Endothelial cell of umbilical vein (primary cell): ENCODE measurements at regions of chr2 and their contacts with region 1.

Region 1: DNA sequence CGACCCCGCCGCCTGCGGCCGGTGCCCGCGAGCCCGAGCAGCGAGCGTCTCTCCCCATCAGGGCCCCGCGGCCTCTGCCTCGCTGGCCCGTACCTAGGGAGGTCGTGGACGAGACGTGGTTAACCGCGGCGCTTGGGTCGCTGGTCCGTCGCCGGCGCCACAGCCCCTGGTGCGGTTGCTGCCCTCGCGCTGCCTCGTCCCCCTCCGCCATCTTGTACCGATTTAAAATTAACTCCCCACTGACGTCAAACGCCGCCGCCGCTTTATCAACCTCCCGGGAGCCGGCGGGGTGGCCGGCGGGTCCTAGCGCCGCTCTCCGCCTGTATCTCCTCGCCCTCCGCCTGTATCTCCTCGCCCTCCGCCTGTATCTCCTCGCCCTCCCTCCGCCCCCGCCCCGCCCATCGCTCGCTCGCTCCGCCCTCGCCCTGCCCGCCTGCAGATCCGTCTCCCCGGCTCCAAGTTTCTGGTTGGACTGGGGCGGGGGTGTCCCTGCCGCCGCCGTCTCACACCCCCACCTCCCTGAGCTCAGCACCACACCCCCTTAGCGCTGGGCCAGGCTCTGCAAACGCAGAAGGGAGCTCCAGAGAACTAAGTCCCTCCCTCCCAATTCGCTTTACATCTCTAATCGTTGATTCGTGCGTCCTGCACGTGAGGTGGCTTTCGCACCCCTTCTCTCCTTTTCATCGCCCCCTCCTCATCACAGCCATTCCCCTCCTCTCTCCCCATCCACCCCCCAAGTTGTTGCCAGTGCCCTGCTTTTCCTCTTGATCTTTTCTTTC is at the start of gene ATL2:
- DNase-seq: peak; percentile 95
- H3K4me3 ChIP-seq: peak within 1 kb of the TSS; percentile 61 to 88 (median 76)
- H3K27ac ChIP-seq: peak within 1 kb of the TSS; percentile 63
- H3K4me1 ChIP-seq: peaks cover 16% of the 10 kb centered on the region
- H3K27me3 ChIP-seq: no peaks in the 10 kb centered on the region
- CTCF ChIP-seq: no peak
- POLR2A ChIP-seq: peak; percentile 76
- total RNA-seq, gene ATL2: 45.5 and 46.3 TPM in 2 replicates

Region 2: DNA sequence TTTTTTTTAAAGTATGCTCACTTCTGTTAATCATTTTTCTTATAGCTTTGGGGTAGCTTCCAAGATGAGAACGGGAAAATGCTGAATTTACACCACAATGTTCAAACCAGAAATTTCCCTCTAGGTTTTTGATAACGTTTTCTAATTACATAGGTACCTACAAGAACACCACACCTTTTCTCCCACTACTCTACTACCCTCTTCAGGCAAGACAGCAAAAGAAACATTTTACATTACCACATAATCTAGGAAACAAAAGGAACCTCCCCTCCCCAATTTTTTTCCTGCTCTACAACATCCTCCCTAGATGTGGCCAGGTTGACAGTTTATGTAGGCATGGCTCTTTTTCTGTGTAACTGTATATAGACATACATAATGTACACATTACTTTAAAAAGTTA is 1113.4 kb before region 1 on chr2:
- CTCF ChIA-PET with region 1: no interaction called
- POLR2A ChIA-PET with region 1: no interaction called
- dilution Hi-C with region 1: no loop called
- intact Hi-C with region 1: no loop called
- DNase-seq: no peak
- H3K4me3 ChIP-seq: no peak overlapping the region
- H3K27ac ChIP-seq: no peak overlapping the region
- H3K4me1 ChIP-seq: no peaks in the 10 kb centered on the region
- H3K27me3 ChIP-seq: no peaks in the 10 kb centered on the region
- CTCF ChIP-seq: no peak
- POLR2A ChIP-seq: no peak

Region 3: DNA sequence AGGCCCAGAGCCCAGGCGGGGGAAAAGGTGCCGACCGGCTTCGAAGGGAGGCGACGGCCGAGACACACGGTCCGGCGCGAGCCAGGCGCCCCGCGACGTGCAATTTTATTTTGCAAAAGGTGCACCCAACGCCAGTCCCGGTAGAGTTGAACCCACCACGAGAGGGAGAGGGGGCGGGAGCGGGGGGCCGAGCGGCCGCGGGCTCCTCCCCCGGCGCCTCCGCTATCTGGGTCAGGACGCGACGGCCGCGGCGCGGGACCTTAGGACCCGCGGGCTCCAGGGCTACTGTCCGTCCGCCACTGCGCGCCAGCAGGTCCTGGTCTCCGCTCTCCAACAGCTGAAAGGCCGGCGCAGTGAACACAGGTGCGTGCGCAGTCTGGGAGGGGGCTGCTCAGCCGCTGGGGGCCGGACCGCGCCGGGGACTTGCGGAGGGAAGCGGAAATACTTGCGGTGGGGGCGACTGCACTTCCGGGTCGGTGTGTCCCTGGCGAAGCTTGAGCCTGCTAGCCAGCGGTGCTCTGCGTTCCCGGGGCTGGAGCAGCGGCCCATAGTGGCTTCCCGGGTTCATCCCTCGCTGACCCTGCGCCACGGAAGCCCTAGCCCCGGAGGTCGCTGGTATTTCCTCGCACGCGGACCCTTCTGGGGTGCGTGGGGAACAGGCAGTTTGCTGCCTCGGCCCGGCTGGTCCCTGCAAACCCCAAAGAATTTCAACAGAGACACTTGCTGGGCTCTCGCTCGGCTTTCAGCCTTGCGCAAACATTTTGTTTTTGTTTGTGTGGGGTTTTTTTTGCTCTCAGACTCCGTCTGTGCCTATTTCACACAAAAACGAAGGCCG is 452.0 kb before region 1 on chr2 and contains the start of gene RMDN2:
- CTCF ChIA-PET with region 1: no interaction called
- POLR2A ChIA-PET with region 1: no interaction called
- dilution Hi-C with region 1: no loop called
- intact Hi-C with region 1: loop called (anchors 2 kb)
- DNase-seq: peak; percentile 89
- H3K4me3 ChIP-seq: peak within 1 kb of the TSS; percentile 53 to 94 (median 70)
- H3K27ac ChIP-seq: peak within 1 kb of the TSS; percentile 48
- H3K4me1 ChIP-seq: peaks cover 4% of the 10 kb centered on the region
- H3K27me3 ChIP-seq: peaks cover 7 to 11% of the 10 kb centered on the region in 2 experiments
- CTCF ChIP-seq: peak in 1 of 2 donors; percentile 13
- POLR2A ChIP-seq: peak; percentile 95
- total RNA-seq, gene RMDN2: 1.8 and 2.8 TPM in 2 replicates

Region 4: DNA sequence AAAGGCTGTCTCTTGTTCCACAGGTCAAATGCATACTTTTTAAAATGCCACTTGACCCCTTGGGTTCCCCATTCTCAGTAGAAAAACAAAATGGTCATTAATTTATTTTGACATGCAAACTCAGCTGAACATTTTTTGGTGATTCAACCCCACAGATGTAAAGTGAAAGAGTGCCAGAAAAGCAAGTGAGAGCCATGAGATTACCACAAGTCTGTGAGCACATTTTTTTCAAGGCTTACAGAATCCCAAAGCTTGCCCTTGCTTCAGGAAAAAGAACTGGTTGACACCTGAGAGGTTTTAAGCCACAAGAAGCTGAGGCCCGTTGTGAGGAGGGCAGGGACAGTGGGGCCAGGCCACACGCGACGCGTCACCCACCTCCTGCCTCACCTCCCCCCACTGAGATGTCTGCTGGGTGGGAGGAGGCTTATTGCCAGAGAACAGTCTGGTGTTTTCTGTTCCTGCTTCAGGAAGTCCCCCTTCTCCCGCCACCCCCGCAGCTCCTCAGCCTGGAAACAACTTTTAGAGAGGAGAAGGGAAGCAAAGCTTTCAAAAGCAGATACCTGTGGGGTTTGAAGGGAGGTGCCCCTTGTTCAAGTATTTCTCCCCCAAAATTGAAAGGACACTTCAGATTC is 230.8 kb before region 1 on chr2:
- CTCF ChIA-PET with region 1: no interaction called
- POLR2A ChIA-PET with region 1: no interaction called
- dilution Hi-C with region 1: no loop called
- intact Hi-C with region 1: loop called (anchors 5 kb)
- DNase-seq: peak; percentile 65
- H3K4me3 ChIP-seq: peak overlapping the region in 1 of 3 experiments; percentile 5
- H3K27ac ChIP-seq: peak overlapping the region; percentile 93
- H3K4me1 ChIP-seq: peaks cover 15% of the 10 kb centered on the region
- H3K27me3 ChIP-seq: no peaks in the 10 kb centered on the region
- CTCF ChIP-seq: no peak
- POLR2A ChIP-seq: no peak

Region 5: GRCh38 chr2:38362232-38362631 is 15.0 kb before region 1 on chr2:
- CTCF ChIA-PET with region 1: interaction called, 40 read pairs
- POLR2A ChIA-PET with region 1: interaction called, 3 read pairs
- dilution Hi-C with region 1: no loop called
- intact Hi-C with region 1: no loop called
- DNase-seq: no peak
- H3K4me3 ChIP-seq: no peak overlapping the region
- H3K27ac ChIP-seq: no peak overlapping the region
- H3K4me1 ChIP-seq: peaks cover 4% of the 10 kb centered on the region
- H3K27me3 ChIP-seq: no peaks in the 10 kb centered on the region
- CTCF ChIP-seq: no peak
- POLR2A ChIP-seq: no peak

Region 6: DNA sequence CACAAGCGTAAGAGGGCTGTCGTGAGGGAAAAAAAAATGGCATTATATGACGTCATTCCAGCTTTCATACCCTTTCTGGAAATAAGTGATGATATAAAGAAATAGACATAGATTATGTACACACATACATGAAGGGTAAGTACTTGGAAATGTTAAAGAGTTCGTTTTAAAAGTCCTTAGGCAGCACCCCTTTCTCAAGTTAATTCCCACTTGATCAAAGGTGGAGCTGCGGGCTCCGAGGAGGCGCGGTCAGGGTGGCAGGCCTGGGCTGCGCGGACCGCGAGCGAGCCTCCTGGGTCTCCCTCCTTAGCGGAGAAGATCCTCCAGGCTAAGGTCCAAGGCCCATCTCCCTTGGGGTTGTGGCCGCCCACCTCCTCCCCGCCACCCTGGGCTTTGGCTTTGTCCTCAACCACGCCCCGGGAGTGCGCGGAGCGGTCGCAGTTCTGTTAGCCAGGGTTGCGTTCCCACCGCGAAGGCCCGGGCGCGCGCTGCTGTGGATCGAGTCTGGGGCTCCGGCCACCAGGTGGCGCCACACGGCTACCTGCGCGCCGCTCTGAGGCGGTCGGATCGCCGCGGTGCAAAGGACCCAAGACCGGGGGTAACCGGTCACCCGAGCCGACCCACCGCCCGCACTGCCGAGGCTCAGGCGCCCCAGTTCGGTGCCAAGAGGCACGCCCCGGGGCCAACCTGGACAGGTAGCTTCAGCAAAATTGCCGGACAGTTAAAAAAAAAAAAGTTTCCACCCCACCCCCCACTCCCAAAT is 158.7 kb after region 1 on chr2:
- CTCF ChIA-PET with region 1: interaction called, 3 read pairs
- POLR2A ChIA-PET with region 1: no interaction called
- dilution Hi-C with region 1: no loop called
- intact Hi-C with region 1: loop called (anchors 10 kb)
- DNase-seq: peak; percentile 75
- H3K4me3 ChIP-seq: peak overlapping the region; percentile 34 to 57 (median 52)
- H3K27ac ChIP-seq: no peak overlapping the region
- H3K4me1 ChIP-seq: no peaks in the 10 kb centered on the region
- H3K27me3 ChIP-seq: no peaks in the 10 kb centered on the region
- CTCF ChIP-seq: peak; percentile 94 to 96
- POLR2A ChIP-seq: no peak

Region 7: GRCh38 chr2:38740851-38741731 is 363.9 kb after region 1 on chr2:
- CTCF ChIA-PET with region 1: no interaction called
- POLR2A ChIA-PET with region 1: no interaction called
- dilution Hi-C with region 1: no loop called
- intact Hi-C with region 1: loop called (anchors 5 kb)
- DNase-seq: peak; percentile 62
- H3K4me3 ChIP-seq: no peak overlapping the region
- H3K27ac ChIP-seq: no peak overlapping the region
- H3K4me1 ChIP-seq: no peaks in the 10 kb centered on the region
- H3K27me3 ChIP-seq: no peaks in the 10 kb centered on the region
- CTCF ChIP-seq: peak; percentile 12 to 29
- POLR2A ChIP-seq: peak; percentile 13